ENCODE measurements at regions of chr5 and their contacts with region 1.

Region 1: GRCh38 chr5:78648359-78649210 is at the start of gene LHFPL2:
- DNase-seq: no peak
- ATAC-seq: peak; percentile 79
- H3K4me3 ChIP-seq: peak within 1 kb of the TSS; percentile 64 to 97 (median 84)
- H3K27ac ChIP-seq: peak within 1 kb of the TSS; percentile 83
- H3K4me1 ChIP-seq: peaks cover 56% of the 10 kb centered on the region
- H3K27me3 ChIP-seq: no peaks in the 10 kb centered on the region
- CTCF ChIP-seq: no peak
- EP300 ChIP-seq: no peak
- POLR2A ChIP-seq: peak in 1 of 2 experiments; percentile 1; a peak in 1 of 4 replicates
- RAD21 ChIP-seq: peak; percentile 39; the same call in 1 of the 2 replicates
- total RNA-seq, gene LHFPL2: 20.0 TPM in 2 replicates

Region 2: DNA sequence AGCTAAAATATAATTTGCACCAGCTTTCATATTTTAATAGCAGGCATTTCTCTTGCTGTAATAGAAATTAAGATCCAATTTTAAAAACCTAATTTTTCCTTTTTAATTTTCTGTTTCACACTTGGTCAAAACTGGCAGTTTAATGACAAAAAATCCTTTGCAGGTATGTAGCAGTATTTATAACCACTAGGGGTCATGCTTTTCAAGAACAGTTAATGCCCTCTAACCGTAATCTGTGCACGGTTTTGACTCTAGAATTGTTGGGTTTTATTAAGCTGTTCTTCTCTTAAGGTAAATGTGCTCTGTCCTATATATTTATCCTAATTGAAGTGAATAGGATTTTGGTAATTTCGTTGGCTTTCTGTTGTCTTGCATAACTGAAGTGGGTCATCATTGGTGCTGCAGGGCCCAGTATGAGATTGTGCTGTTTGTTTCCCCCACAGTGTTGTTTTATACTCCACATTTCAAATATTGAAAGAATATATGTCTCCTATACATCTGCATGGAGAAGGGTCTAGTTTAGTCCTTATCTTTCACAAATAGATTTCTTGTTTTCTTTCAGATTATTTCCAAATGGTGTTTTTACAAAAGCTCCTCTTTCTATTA is 180.7 kb before region 1 on chr5:
- CTCF ChIA-PET with region 1: no interaction called
- POLR2A ChIA-PET with region 1: no interaction called
- in situ Hi-C with region 1: no loop called
- intact Hi-C with region 1: loop called (anchors 5 kb)
- DNase-seq: peak; percentile 31
- ATAC-seq: peak; percentile 71
- H3K4me3 ChIP-seq: no peak overlapping the region
- H3K27ac ChIP-seq: no peak overlapping the region
- H3K4me1 ChIP-seq: peaks cover 5% of the 10 kb centered on the region; the same call in 1 of the 2 replicates
- H3K27me3 ChIP-seq: no peaks in the 10 kb centered on the region
- CTCF ChIP-seq: peak; percentile 66
- EP300 ChIP-seq: no peak
- POLR2A ChIP-seq: no peak
- RAD21 ChIP-seq: no peak

Region 3: DNA sequence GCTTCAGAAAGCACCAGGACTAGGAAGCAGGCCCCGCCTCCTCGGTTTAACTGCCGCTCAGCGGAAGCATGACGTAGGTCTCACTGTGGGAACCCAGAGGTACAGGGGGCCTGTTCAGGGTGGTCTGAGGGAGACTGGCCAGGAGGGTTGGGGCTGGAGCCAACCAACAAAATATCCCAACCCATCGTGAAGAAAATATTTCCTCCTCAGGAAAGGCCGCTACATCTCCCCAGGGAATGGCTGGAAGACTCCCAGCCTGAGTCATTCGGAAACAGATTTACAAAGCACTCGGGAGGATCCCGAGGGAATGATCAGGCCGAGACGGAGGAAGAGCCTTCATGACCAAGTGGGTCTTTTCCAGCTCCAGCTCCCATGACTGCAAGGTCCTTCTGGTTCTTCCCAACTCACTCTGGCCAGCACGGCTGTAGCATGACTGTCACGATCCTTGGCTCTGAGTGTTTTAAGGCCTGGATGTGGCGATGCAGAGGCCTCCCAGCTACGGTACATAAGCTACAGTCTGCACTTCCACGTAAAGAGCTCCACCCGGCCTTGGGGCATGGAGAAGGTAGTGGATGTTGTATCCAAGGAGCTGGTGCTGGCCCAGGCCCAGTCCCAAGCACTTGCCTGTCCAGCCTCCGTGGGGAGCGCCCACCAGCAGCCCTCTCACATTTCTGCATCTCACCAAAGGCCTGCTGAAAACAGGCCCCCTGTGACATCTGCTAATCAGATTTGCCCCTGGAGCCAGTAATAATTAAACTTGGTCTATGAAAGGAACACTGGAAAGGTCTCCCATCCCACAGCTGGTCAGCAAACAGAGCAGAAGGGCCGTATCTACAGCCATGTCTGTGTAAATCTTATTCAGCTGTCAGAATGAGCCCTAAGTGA is 100.6 kb before region 1 on chr5:
- CTCF ChIA-PET with region 1: no interaction called
- POLR2A ChIA-PET with region 1: no interaction called
- in situ Hi-C with region 1: no loop called
- intact Hi-C with region 1: loop called (anchors 5 kb)
- DNase-seq: no peak
- ATAC-seq: no peak
- H3K4me3 ChIP-seq: no peak overlapping the region
- H3K27ac ChIP-seq: no peak overlapping the region
- H3K4me1 ChIP-seq: peaks cover 22% of the 10 kb centered on the region
- H3K27me3 ChIP-seq: no peaks in the 10 kb centered on the region
- CTCF ChIP-seq: no peak
- EP300 ChIP-seq: no peak
- POLR2A ChIP-seq: no peak
- RAD21 ChIP-seq: no peak

Region 4: DNA sequence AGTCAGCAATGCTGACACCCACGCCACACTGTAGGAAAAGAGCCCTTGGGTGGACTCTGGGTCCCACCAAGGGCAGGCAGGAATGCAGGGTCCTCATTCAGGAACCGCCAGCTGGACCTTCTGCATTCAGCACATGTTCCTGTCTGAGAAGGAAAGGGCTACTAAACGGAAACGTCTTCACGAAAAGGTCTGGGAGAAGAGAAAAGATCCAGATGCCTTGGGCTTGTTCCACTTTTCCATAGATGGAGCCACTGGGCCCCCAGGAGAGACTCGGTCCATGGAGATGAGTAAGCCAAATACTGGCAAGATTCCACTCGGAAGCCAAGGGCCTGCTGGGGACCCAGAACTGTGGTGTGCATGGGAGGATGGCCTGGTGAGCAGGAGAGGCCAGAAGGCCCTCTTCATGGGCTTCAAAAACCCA is 38.4 kb before region 1 on chr5:
- CTCF ChIA-PET with region 1: no interaction called
- POLR2A ChIA-PET with region 1: no interaction called
- in situ Hi-C with region 1: no loop called
- intact Hi-C with region 1: no loop called
- DNase-seq: no peak
- ATAC-seq: no peak
- H3K4me3 ChIP-seq: no peak overlapping the region
- H3K27ac ChIP-seq: no peak overlapping the region
- H3K4me1 ChIP-seq: peaks cover 82% of the 10 kb centered on the region
- H3K27me3 ChIP-seq: no peaks in the 10 kb centered on the region
- CTCF ChIP-seq: no peak
- EP300 ChIP-seq: no peak
- POLR2A ChIP-seq: no peak
- RAD21 ChIP-seq: no peak

Region 5: GRCh38 chr5:78727786-78728761 is 79.5 kb after region 1 on chr5:
- CTCF ChIA-PET with region 1: no interaction called
- POLR2A ChIA-PET with region 1: no interaction called
- in situ Hi-C with region 1: no loop called
- intact Hi-C with region 1: loop called (anchors 10 kb)
- DNase-seq: peak; percentile 93
- ATAC-seq: peak; percentile 98
- H3K4me3 ChIP-seq: peak overlapping the region in 2 of 3 experiments; percentile 6 to 33; a peak in 1 of 6 replicates
- H3K27ac ChIP-seq: peak overlapping the region; percentile 87
- H3K4me1 ChIP-seq: peaks cover 34% of the 10 kb centered on the region
- H3K27me3 ChIP-seq: no peaks in the 10 kb centered on the region
- CTCF ChIP-seq: no peak; the same call in 1 of the 2 replicates
- EP300 ChIP-seq: peak; percentile 42 to 92; a peak in 3 of 4 replicates
- POLR2A ChIP-seq: peak in 1 of 2 experiments; percentile 16; a peak in 1 of 4 replicates
- RAD21 ChIP-seq: no peak

Region 6: DNA sequence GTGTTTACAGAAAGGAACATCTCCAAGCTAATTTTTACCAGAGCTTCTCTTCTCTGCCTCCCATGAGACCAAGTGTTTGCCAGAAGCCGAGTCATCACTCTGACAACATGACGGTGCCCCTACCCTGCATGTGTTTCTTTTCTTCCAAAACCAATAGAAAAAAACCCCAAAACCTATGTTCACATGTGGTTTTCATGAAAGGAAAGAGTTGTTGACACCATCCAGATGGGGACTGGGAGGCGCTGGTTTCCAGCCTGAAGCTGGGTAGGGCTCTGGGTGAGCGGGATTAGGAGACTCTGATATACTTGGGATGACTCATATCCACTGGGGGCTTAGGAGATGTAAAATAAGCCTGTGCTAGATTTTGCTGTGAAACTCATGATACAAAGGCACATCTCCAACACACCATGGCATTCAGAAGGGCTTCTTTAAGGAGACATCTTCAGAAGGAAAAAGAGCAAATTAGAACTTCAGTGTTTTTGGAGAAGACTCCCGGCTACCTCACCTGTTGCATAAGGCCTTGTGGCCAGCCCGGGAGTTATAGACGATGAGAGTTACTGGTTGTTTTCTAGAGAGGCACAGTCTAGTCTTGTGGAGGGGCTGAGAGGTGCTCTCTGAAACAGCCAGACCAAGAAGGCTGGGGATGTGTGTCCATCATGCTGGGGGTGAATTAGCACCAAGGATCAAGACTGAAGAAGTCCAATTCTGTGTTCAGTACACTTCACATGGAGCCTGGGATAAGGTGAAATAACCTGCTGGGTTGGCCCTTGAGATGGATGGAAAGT is 108.9 kb after region 1 on chr5:
- CTCF ChIA-PET with region 1: no interaction called
- POLR2A ChIA-PET with region 1: interaction called, 3 read pairs
- in situ Hi-C with region 1: no loop called
- intact Hi-C with region 1: loop called (anchors 5 kb)
- DNase-seq: peak; percentile 46
- ATAC-seq: peak; percentile 78
- H3K4me3 ChIP-seq: peak overlapping the region; percentile 27 to 47 (median 30); a peak in 5 of 6 replicates
- H3K27ac ChIP-seq: no peak overlapping the region
- H3K4me1 ChIP-seq: peaks cover 59% of the 10 kb centered on the region
- H3K27me3 ChIP-seq: 0 out of 5 replicates have a peak, but pooled peaks cover 2 to 11% of the 10 kb centered on the region in 2 experiments
- CTCF ChIP-seq: 0 out of 2 replicates have a peak, but pooled peaks have one; percentile 4
- EP300 ChIP-seq: no peak
- POLR2A ChIP-seq: no peak
- RAD21 ChIP-seq: no peak

Region 7: GRCh38 chr5:78811121-78811817 is 162.7 kb after region 1 on chr5:
- CTCF ChIA-PET with region 1: no interaction called
- POLR2A ChIA-PET with region 1: no interaction called
- in situ Hi-C with region 1: no loop called
- intact Hi-C with region 1: loop called (anchors 10 kb)
- DNase-seq: no peak
- ATAC-seq: no peak
- H3K4me3 ChIP-seq: no peak overlapping the region
- H3K27ac ChIP-seq: no peak overlapping the region
- H3K4me1 ChIP-seq: no peaks in the 10 kb centered on the region
- H3K27me3 ChIP-seq: no peaks in the 10 kb centered on the region
- CTCF ChIP-seq: no peak
- EP300 ChIP-seq: no peak
- POLR2A ChIP-seq: no peak
- RAD21 ChIP-seq: no peak

Region 8: DNA sequence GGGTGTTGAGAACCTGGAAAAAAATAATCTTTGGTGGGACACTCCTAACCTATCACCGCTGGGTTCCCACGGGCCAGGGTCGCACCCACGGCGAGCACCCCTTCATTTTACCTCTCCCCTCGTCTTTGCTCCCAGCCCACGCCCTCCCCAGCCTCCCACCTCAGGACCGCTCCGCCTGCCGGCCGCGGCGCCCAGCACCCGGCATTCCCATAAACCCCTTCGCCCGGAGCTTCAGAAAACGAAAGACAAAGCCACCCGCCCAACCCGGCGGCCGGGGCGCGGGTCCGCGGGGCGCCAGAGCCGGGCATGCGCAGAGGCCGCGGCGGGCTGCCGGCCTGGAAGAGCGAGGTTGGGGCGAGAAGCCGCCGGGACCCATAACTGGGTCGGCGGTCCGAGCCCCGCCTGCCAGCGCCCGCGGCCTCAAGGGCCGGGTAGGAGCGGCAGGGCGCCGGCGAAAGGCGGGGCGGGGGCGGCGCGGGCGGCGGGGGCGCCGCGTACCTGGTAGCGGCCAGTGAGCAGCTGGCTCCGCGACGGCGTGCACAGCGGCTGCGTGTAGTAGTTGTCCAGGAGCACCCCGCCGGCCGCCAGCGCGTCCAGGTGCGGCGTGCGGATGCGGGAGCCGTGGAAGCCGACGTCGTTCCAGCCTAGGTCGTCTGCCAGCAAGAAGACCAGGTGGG is 336.0 kb after region 1 on chr5:
- CTCF ChIA-PET with region 1: no interaction called
- POLR2A ChIA-PET with region 1: no interaction called
- in situ Hi-C with region 1: no loop called
- intact Hi-C with region 1: loop called (anchors 10 kb)
- DNase-seq: peak; percentile 79
- ATAC-seq: peak; percentile 67
- H3K4me3 ChIP-seq: peak overlapping the region; percentile 52 to 93 (median 88)
- H3K27ac ChIP-seq: peak overlapping the region; percentile 99
- H3K4me1 ChIP-seq: peaks cover 57% of the 10 kb centered on the region
- H3K27me3 ChIP-seq: no peaks in the 10 kb centered on the region; a peak in 1 of 5 replicates
- CTCF ChIP-seq: peak; percentile 40
- EP300 ChIP-seq: peak in 1 of 2 experiments; percentile 48; a peak in 2 of 4 replicates
- POLR2A ChIP-seq: peak; percentile 68 to 82
- RAD21 ChIP-seq: peak; percentile 35; the same call in 1 of the 2 replicates

Measured in HepG2 (cell line).